ENCODE measurements at regions of chr19 and their contacts with region 1.

Region 1: GRCh38 chr19:2475702-2476450 is at the start of gene GADD45B:
- DNase-seq: peak; percentile 97 to 99
- H3K4me3 ChIP-seq: peak within 1 kb of the TSS; percentile 97 to 98
- H3K27ac ChIP-seq: peak within 1 kb of the TSS; percentile 96
- H3K4me1 ChIP-seq: peaks cover 6 to 22% (median 18%) of the 10 kb centered on the region in 4 donors
- H3K27me3 ChIP-seq: no peaks in the 10 kb centered on the region
- CTCF ChIP-seq: peak in 1 of 2 experiments; percentile 32

Region 2: DNA sequence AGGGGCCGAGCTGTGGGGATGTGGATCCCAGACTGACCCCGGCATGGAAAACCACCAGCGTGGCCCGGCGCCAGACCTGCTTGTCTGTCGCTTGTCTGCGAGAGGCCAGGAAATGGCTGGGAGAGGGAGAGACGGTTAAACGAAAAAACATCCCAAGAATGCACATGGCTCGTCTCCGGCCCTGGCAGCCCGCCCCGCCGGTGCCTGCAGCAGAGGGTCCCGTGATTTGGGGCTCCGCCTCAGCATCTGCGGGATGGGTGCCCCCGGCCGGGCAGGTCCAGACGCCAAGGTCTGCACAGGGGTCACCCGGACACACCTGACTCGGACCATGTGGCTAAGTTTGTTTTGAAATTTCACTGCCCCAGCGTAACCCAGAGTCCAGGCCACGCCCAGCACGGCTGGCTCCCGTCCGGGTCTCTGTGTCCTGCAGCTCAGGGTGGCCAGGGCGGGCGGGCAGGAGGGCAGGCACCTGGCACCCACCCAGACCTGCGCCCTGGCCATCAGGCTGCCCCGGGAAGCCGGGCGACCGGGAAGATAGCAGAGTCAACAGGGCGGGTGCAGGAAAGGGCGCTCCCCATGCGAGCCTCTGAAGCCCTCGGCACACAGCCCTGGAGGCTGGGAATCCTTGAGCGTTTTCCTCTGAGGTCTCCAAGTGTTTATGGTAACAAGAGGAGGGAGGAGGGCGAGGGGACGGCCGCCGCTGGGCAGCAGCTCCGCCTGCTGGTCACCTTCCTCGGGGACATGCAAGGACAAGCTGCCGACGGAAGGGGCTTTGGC is 103.2 kb after region 1 on chr19:
- intact Hi-C with region 1: loop called (anchors 2 kb)
- DNase-seq: peak; percentile 92 to 97
- H3K4me3 ChIP-seq: peak overlapping the region; percentile 43 to 52
- H3K27ac ChIP-seq: peak overlapping the region; percentile 75 to 91
- H3K4me1 ChIP-seq: peaks cover 3 to 55% (median 45%) of the 10 kb centered on the region in 4 donors
- H3K27me3 ChIP-seq: no peaks in the 10 kb centered on the region
- CTCF ChIP-seq: peak; percentile 95 to 96